AG04450 (cell line): ENCODE measurements at regions of chr4 and their contacts with region 1.

Region 1: DNA sequence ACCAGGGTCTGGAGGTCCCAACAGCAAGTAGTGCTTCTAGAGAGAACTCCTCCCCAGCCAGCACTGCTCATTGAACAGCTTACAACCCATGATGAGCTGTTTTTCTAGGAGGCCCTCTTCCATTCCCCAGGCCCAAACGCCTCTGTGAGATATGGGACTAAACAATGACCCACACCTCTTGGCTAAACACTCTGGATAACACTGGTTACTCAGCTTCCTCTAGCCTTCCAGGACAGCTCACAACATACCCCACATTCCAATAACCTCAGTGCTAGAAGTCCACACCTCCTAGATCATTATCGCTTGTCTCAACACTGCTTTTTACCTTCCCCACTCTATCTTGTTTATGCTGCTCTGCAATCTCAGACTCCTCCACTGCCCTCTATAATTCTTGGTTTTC is 35.4 kb upstream of the PGRMC2 start:
- DNase-seq: no peak
- H3K4me3 ChIP-seq: no peak overlapping the region
- H3K27ac ChIP-seq: peak overlapping the region; percentile 82
- H3K27me3 ChIP-seq: no peaks in the 10 kb centered on the region
- CTCF ChIP-seq: no peak

Region 2: GRCh38 chr4:128338634-128339355 is 15.8 kb after region 1 on chr4:
- CTCF ChIA-PET with region 1: interaction called, 3 read pairs
- POLR2A ChIA-PET with region 1: interaction called, 16 read pairs
- DNase-seq: peak; percentile 53
- H3K4me3 ChIP-seq: no peak overlapping the region
- H3K27ac ChIP-seq: peak overlapping the region; percentile 47
- H3K27me3 ChIP-seq: no peaks in the 10 kb centered on the region
- CTCF ChIP-seq: no peak